Posterior vena cava (tissue), 2 donors: ENCODE measurements at regions of chr13 and their contacts with region 1.

Region 1: DNA sequence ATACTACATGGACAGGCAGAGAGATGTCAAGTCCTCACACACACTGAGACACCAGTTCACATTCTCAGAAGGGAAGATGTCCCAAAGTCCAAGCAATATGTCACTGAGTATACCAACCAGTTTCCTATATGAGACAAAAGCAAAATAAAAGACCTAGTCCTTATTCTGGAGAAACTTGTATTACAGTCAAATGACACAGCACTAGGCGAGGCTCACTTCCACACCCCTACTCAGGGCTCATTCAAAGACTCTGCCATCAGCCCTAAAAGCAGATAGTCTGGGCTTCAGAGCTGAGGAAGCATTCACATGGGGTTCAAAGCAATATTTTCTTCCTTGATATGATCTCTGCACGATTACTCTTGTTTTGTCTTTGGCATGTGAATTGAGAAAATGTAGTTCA is 129.9 kb upstream of the UBL3 start:
- DNase-seq: no peak

Region 2: DNA sequence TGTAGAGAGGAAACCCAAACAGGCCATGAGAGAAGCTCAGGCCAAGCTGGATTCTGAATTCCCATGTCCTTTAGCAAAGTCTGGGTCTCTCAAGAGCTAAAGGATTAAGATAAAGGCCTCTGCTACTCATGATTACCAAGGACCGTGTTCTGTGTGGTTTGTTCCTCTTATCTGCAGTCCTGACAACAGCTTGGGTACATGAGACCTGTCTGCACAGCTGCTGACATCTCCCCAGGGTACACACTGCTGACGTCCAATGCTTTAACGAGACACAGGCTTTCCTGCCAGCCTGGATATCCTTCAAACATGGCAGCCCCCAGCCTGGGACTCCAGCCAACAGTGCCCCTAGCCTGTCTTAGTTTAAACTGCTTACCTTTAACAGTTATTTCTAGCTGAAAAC is 595.9 kb before region 1 on chr13:
- intact Hi-C with region 1: loop called in 1 of 2 experiments (anchors 5 kb)
- DNase-seq: no peak

Region 3: DNA sequence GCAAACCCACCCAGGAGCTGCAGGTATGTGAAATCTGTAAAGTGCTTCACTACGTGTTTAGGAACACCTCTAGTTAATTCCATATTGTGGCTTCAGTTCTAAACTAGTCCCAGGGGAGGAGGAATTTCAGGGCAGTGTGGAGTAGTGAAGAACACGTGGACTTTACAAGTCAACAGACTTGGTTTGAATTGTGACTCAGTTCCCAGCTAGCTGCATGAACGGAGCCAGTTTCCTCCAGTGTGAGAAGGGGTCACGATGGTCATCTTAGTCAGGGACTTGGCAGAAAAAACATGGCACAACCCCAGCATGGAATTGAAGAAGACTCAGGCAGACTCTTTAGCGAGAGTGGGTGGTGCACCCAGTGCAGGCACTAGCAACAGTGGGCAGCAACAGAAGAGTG is 45.8 kb after region 1 on chr13:
- intact Hi-C with region 1: no loop called
- DNase-seq: no peak